H1 (cell line): ENCODE measurements at regions of chr15 and their contacts with region 1.

Region 1: GRCh38 chr15:51737280-51738017 is at the start of gene LYSMD2:
- DNase-seq: peak in 1 of 2 experiments; percentile 68
- H3K4me3 ChIP-seq: peak within 1 kb of the TSS; percentile 55 to 66 (median 58)
- H3K27ac ChIP-seq: no peak within 1 kb of the TSS
- H3K4me1 ChIP-seq: peaks cover 0 to 4% (median 0%) of the 10 kb centered on the region in 4 experiments; a peak in 1 of 7 replicates
- H3K27me3 ChIP-seq: peaks cover 6 to 32% (median 19%) of the 10 kb centered on the region in 4 experiments
- CTCF ChIP-seq: no peak
- EP300 ChIP-seq: no peak
- POLR2A ChIP-seq: no peak; a peak in 1 of 3 replicates
- RAD21 ChIP-seq: 0 out of 4 replicates have a peak, but pooled peaks of 1 of the 2 experiments have one; percentile 1
- total RNA-seq, gene LYSMD2: 2.7 and 3.2 TPM in 2 replicates

Region 2: DNA sequence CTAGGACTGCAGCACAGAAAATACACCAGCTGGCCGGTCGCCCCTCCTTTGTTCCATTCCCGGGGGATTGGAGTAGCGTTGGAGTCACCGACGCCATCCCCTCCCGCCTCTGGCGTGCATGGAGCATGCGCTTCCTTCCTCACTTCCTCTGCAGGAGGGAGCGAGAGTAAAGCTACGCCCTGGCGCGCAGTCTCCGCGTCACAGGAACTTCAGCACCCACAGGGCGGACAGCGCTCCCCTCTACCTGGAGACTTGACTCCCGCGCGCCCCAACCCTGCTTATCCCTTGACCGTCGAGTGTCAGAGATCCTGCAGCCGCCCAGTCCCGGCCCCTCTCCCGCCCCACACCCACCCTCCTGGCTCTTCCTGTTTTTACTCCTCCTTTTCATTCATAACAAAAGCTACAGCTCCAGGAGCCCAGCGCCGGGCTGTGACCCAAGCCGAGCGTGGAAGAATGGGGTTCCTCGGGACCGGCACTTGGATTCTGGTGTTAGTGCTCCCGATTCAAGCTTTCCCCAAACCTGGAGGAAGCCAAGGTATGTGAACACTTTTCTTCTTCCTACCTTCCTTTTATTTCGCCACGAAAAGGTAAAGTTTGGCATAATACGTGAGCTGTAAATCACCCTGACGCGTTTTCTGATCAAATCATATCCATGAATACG is 56.0 kb before region 1 on chr15 and contains the start of gene SCG3:
- CTCF ChIA-PET with region 1: no interaction called
- POLR2A ChIA-PET with region 1: interaction called, 13 read pairs
- DNase-seq: peak; percentile 94 to 99
- H3K4me3 ChIP-seq: peak within 1 kb of the TSS; percentile 59 to 91 (median 80)
- H3K27ac ChIP-seq: 0 out of 2 replicates have a peak within 1 kb of the TSS, but pooled peaks have one; percentile 55
- H3K4me1 ChIP-seq: no peaks in the 10 kb centered on the region
- H3K27me3 ChIP-seq: no peaks in the 10 kb centered on the region
- CTCF ChIP-seq: no peak
- EP300 ChIP-seq: 0 out of 3 replicates have a peak, but pooled peaks of 1 of the 2 experiments have one; percentile 50
- POLR2A ChIP-seq: peak; percentile 50 to 85
- RAD21 ChIP-seq: peak in 1 of 2 experiments; percentile 1; a peak in 2 of 4 replicates
- total RNA-seq, gene SCG3: 42.4 and 45.9 TPM in 2 replicates

Region 3: GRCh38 chr15:51768018-51768417 is 30.6 kb after region 1 on chr15:
- CTCF ChIA-PET with region 1: no interaction called
- POLR2A ChIA-PET with region 1: no interaction called
- DNase-seq: no peak
- H3K4me3 ChIP-seq: no peak overlapping the region
- H3K27ac ChIP-seq: no peak overlapping the region
- H3K4me1 ChIP-seq: peaks cover 0 to 3% (median 0%) of the 10 kb centered on the region in 4 experiments; a peak in 1 of 7 replicates
- H3K27me3 ChIP-seq: no peaks in the 10 kb centered on the region
- CTCF ChIP-seq: no peak
- EP300 ChIP-seq: no peak
- POLR2A ChIP-seq: no peak
- RAD21 ChIP-seq: no peak

Region 4: GRCh38 chr15:51816611-51817010 is 79.2 kb after region 1 on chr15:
- CTCF ChIA-PET with region 1: no interaction called
- POLR2A ChIA-PET with region 1: no interaction called
- DNase-seq: no peak
- H3K4me3 ChIP-seq: no peak overlapping the region
- H3K27ac ChIP-seq: no peak overlapping the region
- H3K4me1 ChIP-seq: no peaks in the 10 kb centered on the region; a peak in 1 of 7 replicates
- H3K27me3 ChIP-seq: no peaks in the 10 kb centered on the region
- CTCF ChIP-seq: no peak
- EP300 ChIP-seq: no peak
- POLR2A ChIP-seq: no peak
- RAD21 ChIP-seq: no peak